RWPE1 (cell line): ENCODE measurements at regions of chr1 and their contacts with region 1.

Region 1: DNA sequence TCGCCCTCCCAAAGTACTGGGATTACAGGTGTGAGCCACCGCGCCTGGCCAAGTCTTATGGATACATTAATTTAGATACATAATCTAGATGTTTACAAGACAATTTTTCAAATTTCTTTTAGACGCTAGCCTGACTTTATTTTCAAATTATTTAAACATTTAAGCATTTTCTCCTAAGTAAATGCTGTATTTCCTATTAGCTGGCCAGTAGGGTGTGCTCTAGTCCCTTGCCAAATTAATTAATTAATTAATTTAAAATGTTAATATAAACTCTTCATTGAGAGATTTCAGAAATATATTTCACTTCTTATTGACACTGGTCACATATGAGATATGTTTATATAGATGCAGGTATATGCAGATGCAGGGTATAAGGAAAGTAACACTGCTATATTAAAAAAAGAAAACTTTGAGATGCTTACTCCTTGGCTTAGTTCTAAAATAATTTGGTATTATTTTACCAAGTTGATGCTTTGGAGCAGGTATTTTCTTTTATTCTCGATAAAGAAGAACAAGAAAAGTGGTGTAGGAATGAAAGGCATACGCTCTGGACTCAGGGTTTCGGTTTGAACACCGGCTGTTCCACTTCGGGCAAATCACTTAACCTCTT is 5.2 kb upstream of the ERRFI1 start:
- DNase-seq: no peak
- H3K27ac ChIP-seq: no peak overlapping the region
- CTCF ChIP-seq: peak; percentile 83

Region 2: DNA sequence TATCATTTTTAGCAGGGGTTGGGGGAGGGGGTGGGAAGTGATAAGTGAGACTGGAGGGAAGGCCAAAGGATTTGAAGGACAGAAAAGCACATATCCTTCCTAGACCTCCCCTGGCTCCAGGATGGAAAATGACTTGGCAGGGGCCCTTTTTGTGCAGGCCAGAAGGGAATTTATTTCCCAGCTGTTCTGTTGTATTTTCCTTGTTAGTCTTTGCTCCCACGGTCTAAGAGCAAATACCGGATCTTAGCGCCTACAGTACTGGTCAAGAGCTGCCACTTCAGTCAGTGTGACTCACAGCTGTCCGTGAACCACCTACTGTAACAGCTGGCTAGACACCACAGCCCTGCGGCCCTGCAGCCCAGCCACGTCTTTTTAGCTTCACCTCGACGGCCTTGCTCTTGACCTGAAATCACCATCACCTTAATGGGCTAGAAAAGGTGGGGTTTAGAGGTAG is 45.9 kb after region 1 on chr1:
- CTCF ChIA-PET with region 1: no interaction called
- POLR2A ChIA-PET with region 1: no interaction called
- DNase-seq: peak; percentile 71
- H3K27ac ChIP-seq: peak overlapping the region; percentile 79
- CTCF ChIP-seq: no peak

Region 3: DNA sequence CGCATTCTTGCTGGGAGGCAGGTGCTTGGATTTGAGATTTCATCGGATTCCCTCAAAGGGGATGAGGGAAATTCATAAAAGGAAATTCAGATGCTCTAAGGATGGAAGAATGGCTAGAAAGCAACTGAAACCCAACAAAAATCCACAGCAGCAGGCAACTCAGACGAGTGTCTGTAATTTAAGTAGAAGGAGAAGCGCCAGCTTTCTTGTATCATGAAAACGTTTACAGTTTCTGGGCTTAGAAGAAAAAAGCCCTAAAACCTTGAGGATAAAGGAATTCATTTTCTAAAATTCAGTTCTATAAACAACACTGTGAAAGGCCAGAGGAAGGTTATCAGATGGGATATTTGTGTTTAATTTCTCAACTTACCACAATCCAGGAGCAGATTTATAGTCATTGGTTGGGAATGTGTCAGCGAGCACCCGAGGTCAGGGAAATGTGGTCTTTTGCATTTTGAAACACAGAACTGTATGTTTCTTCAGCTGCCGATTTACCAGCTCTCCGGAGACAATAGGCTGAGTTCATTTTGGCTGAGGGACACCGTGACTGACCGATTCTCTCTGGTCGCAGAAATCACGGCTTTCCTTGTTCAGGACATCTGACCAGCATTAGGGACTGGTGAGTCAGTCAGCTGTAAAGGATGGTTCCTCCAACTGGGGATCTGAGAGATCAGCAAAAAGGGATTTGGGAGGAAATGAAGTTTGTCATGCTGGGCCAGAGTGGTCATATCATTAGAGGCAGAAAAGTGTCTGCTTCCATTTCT is 106.4 kb after region 1 on chr1:
- CTCF ChIA-PET with region 1: interaction called, 3 read pairs
- POLR2A ChIA-PET with region 1: interaction called, 13 read pairs
- DNase-seq: peak; percentile 74
- H3K27ac ChIP-seq: peak overlapping the region; percentile 65
- CTCF ChIP-seq: no peak

Region 4: DNA sequence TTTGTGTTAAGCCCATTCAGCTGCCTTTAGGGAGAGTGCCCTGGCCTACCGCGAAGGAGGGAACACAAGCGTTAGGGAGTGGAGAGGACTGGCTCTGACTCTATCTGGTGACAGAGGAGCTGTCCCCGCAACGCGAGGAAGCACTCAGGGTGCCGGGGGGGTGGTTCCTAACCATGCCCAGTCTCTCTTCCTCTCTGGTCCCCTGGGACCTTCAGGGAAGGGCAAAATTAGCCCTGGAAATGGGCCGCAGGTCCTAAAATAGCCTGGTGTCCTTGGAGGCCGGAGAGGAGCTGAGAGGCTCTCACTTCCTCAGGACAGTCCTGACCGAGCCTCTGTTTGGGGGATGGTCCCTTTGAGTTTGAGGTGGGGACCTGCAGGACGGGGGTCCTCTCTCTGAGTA is 292.4 kb after region 1 on chr1:
- CTCF ChIA-PET with region 1: no interaction called
- POLR2A ChIA-PET with region 1: no interaction called
- DNase-seq: no peak
- H3K27ac ChIP-seq: no peak overlapping the region
- CTCF ChIP-seq: no peak